ENCODE measurements at regions of chr13 and their contacts with region 1.

Region 1: GRCh38 chr13:77477299-77477848 is 58.1 kb upstream of the SCEL start:
- DNase-seq: no peak
- H3K4me3 ChIP-seq: no peak overlapping the region
- H3K27ac ChIP-seq: no peak overlapping the region
- H3K4me1 ChIP-seq: peaks cover 0 to 7% (median 4%) of the 10 kb centered on the region in 4 experiments
- H3K27me3 ChIP-seq: no peaks in the 10 kb centered on the region

Region 2: DNA sequence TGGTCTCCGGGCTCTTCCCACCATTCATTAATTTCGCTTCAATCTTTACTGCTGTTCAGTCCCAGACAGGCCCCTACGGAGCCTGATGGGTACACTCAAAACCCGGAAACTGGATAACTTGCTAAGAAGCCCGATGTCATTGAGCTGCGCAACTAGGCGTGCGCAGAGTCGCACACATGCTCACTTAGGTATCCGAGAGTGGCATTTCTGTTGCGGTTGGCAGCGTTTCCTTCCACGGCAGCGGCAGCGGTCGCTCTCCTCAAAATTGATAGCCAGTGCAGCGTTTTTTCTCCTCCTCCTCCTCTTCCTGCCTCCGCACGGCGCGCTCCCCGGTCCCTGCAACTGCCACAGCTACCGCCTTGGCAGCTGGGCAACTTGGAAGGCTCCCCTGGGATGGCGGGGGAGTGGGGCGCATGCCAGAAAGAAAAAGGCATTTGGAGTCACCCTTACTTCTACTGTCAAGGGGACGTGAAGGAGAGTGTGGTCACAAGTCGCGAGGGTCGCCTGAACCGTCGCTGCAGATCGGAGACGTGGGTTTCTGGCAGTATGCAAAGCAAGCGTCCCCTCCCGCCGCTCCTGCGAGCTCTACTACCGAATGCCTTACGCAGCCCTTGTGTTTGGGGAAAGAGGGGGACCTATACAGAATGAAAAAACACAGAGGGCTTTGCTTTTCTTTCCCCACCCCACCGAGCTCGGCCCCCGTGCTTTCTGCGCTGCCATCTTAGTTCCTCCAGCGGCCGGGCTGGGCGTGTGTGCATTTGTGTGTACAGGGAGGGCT is 148.1 kb before region 1 on chr13:
- CTCF ChIA-PET with region 1: interaction called, 25 read pairs
- POLR2A ChIA-PET with region 1: interaction called, 8 read pairs
- DNase-seq: peak; percentile 99 to 100 (median 100)
- H3K4me3 ChIP-seq: peak overlapping the region; percentile 76 to 99 (median 94)
- H3K27ac ChIP-seq: peak overlapping the region; percentile 74 to 87
- H3K4me1 ChIP-seq: peaks cover 28 to 59% (median 47%) of the 10 kb centered on the region in 4 experiments
- H3K27me3 ChIP-seq: no peaks in the 10 kb centered on the region

Region 3: DNA sequence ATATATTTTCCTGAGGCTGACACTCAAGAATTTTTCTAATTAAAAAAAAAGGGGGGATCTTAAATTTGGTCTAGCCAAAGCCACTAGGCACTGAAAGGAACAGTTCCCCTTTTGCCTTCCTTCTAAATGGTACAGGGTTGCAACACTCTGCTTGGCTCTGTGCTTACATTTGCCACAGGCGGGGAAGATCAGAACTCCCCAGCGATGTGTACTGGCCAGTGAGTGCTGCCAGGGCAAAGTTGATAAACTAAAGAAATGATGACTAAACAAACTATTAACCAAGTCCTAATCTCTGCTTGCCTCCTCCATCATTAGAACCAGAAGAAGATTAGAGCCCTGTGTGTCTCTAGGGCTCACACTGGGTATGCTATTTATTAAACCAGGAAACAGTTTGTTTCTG is 17.2 kb before region 1 on chr13:
- CTCF ChIA-PET with region 1: interaction called, 10 read pairs
- POLR2A ChIA-PET with region 1: no interaction called
- DNase-seq: peak in 2 of 3 donors; percentile 36 to 48
- H3K4me3 ChIP-seq: no peak overlapping the region
- H3K27ac ChIP-seq: no peak overlapping the region
- H3K4me1 ChIP-seq: peaks cover 0 to 13% (median 0%) of the 10 kb centered on the region in 4 experiments
- H3K27me3 ChIP-seq: no peaks in the 10 kb centered on the region

Measured in common myeloid progenitor, CD34-positive (primary cell).